SK-N-SH (cell line): ENCODE measurements at regions of chr4 and their contacts with region 1.

Region 1: DNA sequence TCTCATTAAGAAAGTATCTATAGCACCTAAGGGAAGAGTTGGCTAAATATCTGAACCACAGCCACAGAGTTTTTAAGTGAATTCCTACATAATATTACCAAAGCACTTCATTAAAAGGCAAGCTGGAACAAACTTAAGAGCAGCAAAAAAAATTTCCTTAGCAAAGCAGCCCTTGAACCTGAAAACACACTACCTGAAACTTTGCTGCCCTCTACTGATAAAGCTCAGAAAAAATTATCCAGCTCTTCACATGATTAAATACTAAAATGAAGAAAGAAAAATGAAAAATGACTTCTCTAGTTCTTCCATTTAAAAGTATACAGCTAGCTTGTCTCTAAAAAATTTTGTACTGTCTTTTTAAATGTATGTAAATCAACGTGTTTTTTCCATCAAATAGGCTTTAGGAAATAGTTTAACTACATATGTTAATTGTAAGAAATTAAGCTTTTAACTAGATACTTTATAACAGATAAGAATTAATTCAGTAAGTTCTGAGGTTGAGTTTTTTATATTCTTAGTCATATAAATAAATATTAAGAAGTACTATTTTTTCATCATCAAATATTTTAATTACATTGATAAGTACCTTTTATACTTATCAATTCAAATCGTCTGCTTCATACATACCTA is 156.1 kb downstream of the STPG2 start:
- DNase-seq: peak; percentile 41
- H3K4me3 ChIP-seq: peak overlapping the region in 1 of 2 experiments; percentile 39; a peak in 1 of 4 replicates
- H3K27ac ChIP-seq: no peak overlapping the region
- H3K4me1 ChIP-seq: no peaks in the 10 kb centered on the region
- H3K27me3 ChIP-seq: no peaks in the 10 kb centered on the region
- CTCF ChIP-seq: peak; percentile 67
- EP300 ChIP-seq: no peak
- RAD21 ChIP-seq: peak; percentile 86

Region 2: GRCh38 chr4:97720869-97721432 is 266.2 kb before region 1 on chr4:
- CTCF ChIA-PET with region 1: interaction called, 14 read pairs
- POLR2A ChIA-PET with region 1: no interaction called
- DNase-seq: peak; percentile 46
- H3K4me3 ChIP-seq: no peak overlapping the region
- H3K27ac ChIP-seq: peak overlapping the region in 1 of 2 experiments; percentile 76; a peak in 2 of 4 replicates
- H3K4me1 ChIP-seq: no peaks in the 10 kb centered on the region; a peak in 1 of 4 replicates
- H3K27me3 ChIP-seq: no peaks in the 10 kb centered on the region
- CTCF ChIP-seq: peak; percentile 61
- EP300 ChIP-seq: peak in 1 of 2 experiments; percentile 79; a peak in 1 of 4 replicates
- RAD21 ChIP-seq: peak; percentile 75

Region 3: GRCh38 chr4:98101988-98102387 is 114.9 kb after region 1 on chr4:
- CTCF ChIA-PET with region 1: no interaction called
- POLR2A ChIA-PET with region 1: no interaction called
- DNase-seq: no peak
- H3K4me3 ChIP-seq: no peak overlapping the region
- H3K27ac ChIP-seq: no peak overlapping the region
- H3K4me1 ChIP-seq: no peaks in the 10 kb centered on the region
- H3K27me3 ChIP-seq: no peaks in the 10 kb centered on the region; the same call in 1 of the 2 replicates
- CTCF ChIP-seq: no peak
- EP300 ChIP-seq: no peak
- RAD21 ChIP-seq: no peak

Region 4: DNA sequence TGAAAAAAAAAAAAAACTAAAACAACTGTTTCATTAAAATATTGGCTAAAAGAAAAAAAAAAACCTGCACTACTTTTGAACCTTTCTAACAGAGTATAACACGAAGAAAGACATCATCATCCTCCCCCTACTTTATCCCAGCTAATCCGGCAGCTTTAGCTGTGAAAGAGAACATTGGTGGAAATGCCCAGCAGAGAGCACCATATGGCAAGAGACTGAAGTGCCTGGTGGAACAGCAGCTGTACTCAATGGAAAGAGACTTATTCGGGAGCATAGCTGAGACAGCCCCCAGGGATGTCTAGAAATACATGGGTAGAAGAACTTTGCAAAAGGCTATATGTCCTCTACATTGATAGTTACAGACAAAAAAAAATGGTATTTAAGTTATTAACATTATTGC is 125.9 kb after region 1 on chr4:
- CTCF ChIA-PET with region 1: no interaction called
- POLR2A ChIA-PET with region 1: no interaction called
- DNase-seq: no peak
- H3K4me3 ChIP-seq: no peak overlapping the region
- H3K27ac ChIP-seq: no peak overlapping the region
- H3K4me1 ChIP-seq: peaks cover 0 to 4% of the 10 kb centered on the region in 2 experiments; a peak in 1 of 4 replicates
- H3K27me3 ChIP-seq: no peaks in the 10 kb centered on the region
- CTCF ChIP-seq: peak; percentile 37
- EP300 ChIP-seq: no peak
- RAD21 ChIP-seq: peak; percentile 59